GM12878 (cell line): ENCODE measurements at regions of chr10 and their contacts with region 1.

Region 1: DNA sequence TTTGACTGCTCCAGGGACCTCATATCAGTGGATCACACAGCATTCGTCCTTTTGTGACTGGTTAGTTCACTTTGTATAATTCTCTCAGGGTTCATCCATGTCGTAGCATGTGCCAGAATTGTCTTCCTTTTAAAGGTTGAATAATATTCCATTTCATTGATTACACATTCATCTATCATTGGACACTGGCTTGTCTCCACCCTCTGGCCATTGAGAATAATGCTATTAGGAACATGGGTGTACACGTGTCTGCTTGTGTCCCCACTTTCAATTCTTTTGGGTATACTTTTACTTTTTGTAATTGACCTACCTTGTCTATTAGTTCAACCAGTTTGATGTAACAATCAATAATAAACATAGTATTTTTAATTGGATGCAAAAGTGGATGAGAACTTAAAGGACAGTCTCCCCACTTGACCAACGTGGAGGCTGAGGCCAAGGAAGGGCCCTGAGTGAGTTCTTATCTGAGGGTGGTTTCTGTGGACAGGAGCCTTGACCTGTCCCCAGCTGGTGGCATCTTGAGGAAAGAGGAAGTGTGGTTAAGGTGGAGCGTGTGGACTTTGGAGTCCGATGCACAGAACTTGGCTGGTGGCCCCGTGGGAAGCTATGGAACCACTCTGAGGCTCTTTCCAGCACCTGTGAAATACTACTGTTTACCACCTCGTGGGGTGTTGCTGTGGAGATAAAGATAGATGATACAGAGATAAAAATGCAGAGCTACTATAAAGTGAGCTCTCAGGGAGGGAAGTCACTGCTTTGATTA is 16.6 kb downstream of the WDFY4 start:
- DNase-seq: no peak
- ATAC-seq: peak; percentile 49
- H3K4me3 ChIP-seq: no peak overlapping the region
- H3K27ac ChIP-seq: no peak overlapping the region
- H3K4me1 ChIP-seq: peaks cover 38% of the 10 kb centered on the region
- H3K27me3 ChIP-seq: no peaks in the 10 kb centered on the region
- CTCF ChIP-seq: peak; percentile 23 to 59 (median 43); a peak in 4 of 6 replicates
- EP300 ChIP-seq: no peak
- POLR2A ChIP-seq: no peak
- RAD21 ChIP-seq: peak; percentile 73

Region 2: GRCh38 chr10:48506147-48506917 is 195.0 kb before region 1 on chr10:
- CTCF ChIA-PET with region 1: no interaction called
- POLR2A ChIA-PET with region 1: no interaction called
- RAD21 ChIA-PET with region 1: no interaction called
- SMC1A ChIA-PET with region 1: no interaction called
- in situ Hi-C with region 1: no loop called
- intact Hi-C with region 1: no loop called
- DNase-seq: no peak
- ATAC-seq: peak; percentile 60
- H3K4me3 ChIP-seq: no peak overlapping the region
- H3K27ac ChIP-seq: no peak overlapping the region
- H3K4me1 ChIP-seq: peaks cover 6% of the 10 kb centered on the region
- H3K27me3 ChIP-seq: no peaks in the 10 kb centered on the region
- CTCF ChIP-seq: peak; percentile 35 to 55 (median 54); a peak in 5 of 6 replicates
- EP300 ChIP-seq: no peak
- POLR2A ChIP-seq: no peak
- RAD21 ChIP-seq: peak; percentile 68

Region 3: DNA sequence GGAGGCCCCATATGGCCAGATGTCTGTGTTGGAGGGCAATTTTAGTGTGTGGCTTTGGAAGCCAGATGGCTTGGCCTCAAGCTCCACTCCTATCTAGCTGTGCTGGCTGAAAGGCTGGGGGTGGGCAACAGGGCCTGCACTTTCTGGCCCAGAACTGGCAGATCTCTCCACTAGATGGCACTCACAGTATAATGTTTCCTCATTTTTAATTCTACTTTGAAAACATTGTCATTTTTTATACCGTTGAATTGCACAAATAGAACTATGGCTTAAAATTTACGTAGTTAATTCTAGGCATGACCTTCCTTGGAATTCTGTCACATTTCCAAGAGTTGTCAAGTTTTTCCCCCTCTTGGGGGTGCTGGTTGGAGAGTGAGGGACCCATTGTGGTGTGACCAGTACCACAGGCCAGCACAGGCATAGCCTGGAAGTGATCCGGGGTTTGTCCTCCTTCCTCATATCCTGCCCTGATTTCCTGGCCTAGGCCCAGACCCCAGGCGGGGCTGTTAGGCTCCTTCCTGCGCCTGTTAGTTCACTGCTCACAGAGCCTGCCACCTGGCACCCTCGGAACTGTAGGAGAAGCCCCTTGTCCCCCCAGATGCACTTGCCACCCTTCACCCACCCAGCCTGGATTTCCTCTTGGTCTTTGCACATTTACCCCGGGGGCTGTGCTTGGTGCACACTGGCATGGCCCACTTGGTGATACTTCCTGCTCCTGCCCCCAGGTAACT is 149.3 kb before region 1 on chr10:
- CTCF ChIA-PET with region 1: interaction called, 4 read pairs
- POLR2A ChIA-PET with region 1: no interaction called
- RAD21 ChIA-PET with region 1: no interaction called
- SMC1A ChIA-PET with region 1: no interaction called
- in situ Hi-C with region 1: no loop called
- intact Hi-C with region 1: loop called (anchors 5 kb)
- DNase-seq: no peak
- ATAC-seq: peak; percentile 93
- H3K4me3 ChIP-seq: no peak overlapping the region
- H3K27ac ChIP-seq: no peak overlapping the region
- H3K4me1 ChIP-seq: no peaks in the 10 kb centered on the region
- H3K27me3 ChIP-seq: no peaks in the 10 kb centered on the region; a peak in 1 of 4 replicates
- CTCF ChIP-seq: peak; percentile 60 to 84 (median 78)
- EP300 ChIP-seq: no peak
- POLR2A ChIP-seq: no peak
- RAD21 ChIP-seq: peak; percentile 80

Region 4: DNA sequence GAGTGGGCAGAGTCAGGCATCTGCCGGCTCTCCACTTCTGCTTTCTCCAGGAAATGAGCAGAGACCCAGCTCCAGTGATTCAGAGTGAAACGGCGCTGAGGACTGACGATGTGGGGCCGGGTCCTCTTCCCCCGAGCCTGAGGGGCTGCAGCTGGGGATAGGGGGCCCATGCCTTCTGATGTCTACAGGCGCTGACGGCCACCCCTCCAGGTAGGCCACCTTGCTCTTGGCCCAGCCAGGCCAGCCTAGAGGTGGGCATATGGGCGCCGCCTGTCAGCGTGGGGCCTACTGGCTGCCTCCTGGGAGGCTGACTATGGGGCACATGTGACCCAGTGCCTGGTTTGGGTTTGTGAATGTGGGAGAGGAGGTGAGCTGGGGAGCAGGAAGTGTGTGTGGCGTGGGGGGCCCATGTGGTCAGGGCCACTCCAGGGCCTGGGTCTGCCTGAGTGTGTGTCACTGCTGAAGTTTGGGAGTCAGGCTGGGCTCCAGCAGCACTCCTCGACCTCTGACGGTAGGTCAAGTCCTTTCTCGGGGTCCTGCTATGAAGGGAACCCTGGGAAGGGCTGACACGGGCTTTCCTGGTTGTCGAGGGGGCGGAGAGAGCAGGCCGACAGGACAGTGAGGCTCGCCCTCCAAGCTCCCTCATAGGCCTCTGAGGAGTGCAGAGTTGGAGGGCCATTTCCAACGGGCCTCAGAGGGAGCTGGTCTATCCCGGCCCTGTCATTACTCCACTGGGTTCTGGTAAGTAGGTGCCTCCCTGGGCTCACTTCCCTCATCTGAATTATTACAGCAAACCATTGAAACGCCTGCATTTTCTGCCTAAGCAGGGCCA is 16.3 kb before region 1 on chr10 and contains the start of gene WDFY4:
- CTCF ChIA-PET with region 1: interaction called, 28 read pairs
- POLR2A ChIA-PET with region 1: interaction called, 5 read pairs
- RAD21 ChIA-PET with region 1: interaction called, 16 read pairs
- SMC1A ChIA-PET with region 1: interaction called, 27 read pairs
- in situ Hi-C with region 1: no loop called
- intact Hi-C with region 1: no loop called
- DNase-seq: no peak
- ATAC-seq: peak; percentile 79
- H3K4me3 ChIP-seq: peak within 1 kb of the TSS; percentile 70
- H3K27ac ChIP-seq: peak within 1 kb of the TSS; percentile 96
- H3K4me1 ChIP-seq: peaks cover 28% of the 10 kb centered on the region
- H3K27me3 ChIP-seq: no peaks in the 10 kb centered on the region
- CTCF ChIP-seq: no peak
- EP300 ChIP-seq: no peak
- POLR2A ChIP-seq: peak; percentile 80; the same call in 1 of the 2 replicates
- RAD21 ChIP-seq: no peak
- polyA plus RNA-seq, gene WDFY4: 13.5 to 13.9 TPM

Region 5: GRCh38 chr10:48714088-48714487 is 12.8 kb after region 1 on chr10:
- CTCF ChIA-PET with region 1: interaction called, 12 read pairs
- POLR2A ChIA-PET with region 1: interaction called, 4 read pairs
- RAD21 ChIA-PET with region 1: interaction called, 5 read pairs
- SMC1A ChIA-PET with region 1: interaction called, 60 read pairs
- in situ Hi-C with region 1: no loop called
- intact Hi-C with region 1: no loop called
- DNase-seq: no peak
- ATAC-seq: no peak
- H3K4me3 ChIP-seq: no peak overlapping the region
- H3K27ac ChIP-seq: no peak overlapping the region
- H3K4me1 ChIP-seq: no peaks in the 10 kb centered on the region
- H3K27me3 ChIP-seq: no peaks in the 10 kb centered on the region
- CTCF ChIP-seq: no peak
- EP300 ChIP-seq: no peak
- POLR2A ChIP-seq: no peak
- RAD21 ChIP-seq: no peak